Activated CD4-positive, alpha-beta T cell treated with anti-CD3 and anti-CD28 coated beads for 36 hours (primary cell): ENCODE measurements at regions of chr12 and their contacts with region 1.

Region 1: GRCh38 chr12:53746592-53747092 is 5.1 kb downstream of the CISTR start:
- DNase-seq: peak; percentile 94
- ATAC-seq: peak; percentile 86
- H3K4me3 Mint-ChIP-seq: no peak overlapping the region
- H3K27ac Mint-ChIP-seq: no peak overlapping the region
- H3K4me1 Mint-ChIP-seq: peaks cover 2% of the 10 kb centered on the region
- H3K27me3 Mint-ChIP-seq: peaks cover 38% of the 10 kb centered on the region

Region 2: DNA sequence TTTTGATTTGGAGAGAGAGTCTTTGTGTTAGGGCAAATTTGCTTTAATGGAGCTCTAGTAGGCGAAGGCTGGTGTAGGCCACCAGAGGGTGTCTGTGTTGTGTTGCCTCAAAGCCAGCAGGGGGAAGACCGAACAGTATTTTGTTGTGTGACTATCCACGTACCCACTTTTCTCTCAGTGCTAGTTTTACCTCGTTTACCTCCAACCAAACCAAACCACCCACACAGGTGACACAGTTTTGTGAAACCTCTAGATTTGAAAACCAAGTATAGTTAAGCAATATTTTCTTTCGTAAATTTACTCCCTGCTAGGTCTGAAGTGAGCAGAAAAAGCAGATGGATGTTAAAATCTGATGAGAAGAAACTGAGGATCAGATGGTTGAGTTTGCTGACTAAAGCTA is 203.1 kb before region 1 on chr12:
- CTCF ChIA-PET with region 1: interaction called, 32 read pairs
- POLR2A ChIA-PET with region 1: no interaction called
- intact Hi-C with region 1: loop called (anchors 1 to 2 kb)
- DNase-seq: peak; percentile 79
- ATAC-seq: peak; percentile 99
- H3K4me3 Mint-ChIP-seq: no peak overlapping the region
- H3K27ac Mint-ChIP-seq: peak overlapping the region; percentile 78
- H3K4me1 Mint-ChIP-seq: peaks cover 20% of the 10 kb centered on the region
- H3K27me3 Mint-ChIP-seq: no peaks in the 10 kb centered on the region

Region 3: DNA sequence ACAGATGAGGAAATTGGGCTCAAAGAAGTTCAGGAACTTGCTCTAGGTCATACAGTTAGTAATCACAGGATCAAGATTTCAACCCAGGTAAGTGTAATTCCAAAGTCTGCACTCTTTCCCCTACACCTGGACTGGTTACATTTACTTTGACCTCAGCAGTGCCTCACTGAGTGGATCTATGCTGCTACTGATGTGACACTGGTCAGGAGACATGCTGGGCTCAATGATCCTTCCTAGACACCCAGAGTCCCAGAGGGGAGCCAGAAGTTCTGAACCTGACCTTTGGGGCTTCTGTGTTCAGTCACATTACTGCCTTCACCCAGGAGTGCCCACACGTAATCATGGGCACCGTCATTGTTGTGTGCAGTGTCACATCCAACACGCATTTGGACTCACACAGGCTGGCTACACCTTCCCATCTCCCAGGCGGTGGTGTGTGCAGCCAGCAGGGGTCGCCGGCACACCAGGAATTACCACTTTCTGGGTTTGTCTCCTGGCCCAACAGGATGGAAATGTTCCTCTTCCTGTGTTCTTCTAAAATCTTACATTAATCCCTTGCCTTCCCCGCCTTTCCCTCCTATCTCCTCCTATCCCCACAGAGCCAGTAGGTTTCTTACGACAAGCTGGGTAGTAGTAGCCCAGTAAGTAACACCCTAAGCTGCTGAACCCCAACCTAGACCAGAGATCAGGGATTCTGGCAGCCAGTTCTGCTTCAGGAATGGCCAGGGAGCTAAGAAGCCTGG is 45.0 kb before region 1 on chr12:
- CTCF ChIA-PET with region 1: interaction called, 144 read pairs
- POLR2A ChIA-PET with region 1: interaction called, 3 read pairs
- intact Hi-C with region 1: loop called (anchors 1 kb)
- DNase-seq: peak; percentile 88
- ATAC-seq: peak; percentile 96
- H3K4me3 Mint-ChIP-seq: no peak overlapping the region
- H3K27ac Mint-ChIP-seq: no peak overlapping the region
- H3K4me1 Mint-ChIP-seq: peaks cover 4% of the 10 kb centered on the region
- H3K27me3 Mint-ChIP-seq: peaks cover 60% of the 10 kb centered on the region

Region 4: DNA sequence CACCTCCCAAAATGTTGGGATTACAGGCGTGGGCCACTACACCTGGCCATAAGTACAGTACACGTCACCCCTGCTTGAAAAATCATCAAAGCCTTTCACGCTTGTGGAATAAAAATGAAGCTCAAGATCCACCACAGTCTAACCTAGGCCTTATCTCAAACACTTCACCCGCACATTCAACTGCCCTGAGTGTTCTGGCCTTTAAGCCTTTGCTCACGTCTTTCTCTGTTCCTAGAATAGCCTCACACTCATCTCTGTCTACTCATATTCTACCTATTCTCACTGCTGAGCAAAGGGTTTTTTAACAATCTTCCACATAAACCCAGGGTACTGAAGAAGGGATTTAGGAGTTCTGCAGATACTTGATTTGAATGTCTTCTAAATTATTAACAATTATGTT is 29.3 kb before region 1 on chr12:
- CTCF ChIA-PET with region 1: interaction called, 37 read pairs
- POLR2A ChIA-PET with region 1: no interaction called
- intact Hi-C with region 1: no loop called
- DNase-seq: no peak
- ATAC-seq: no peak
- H3K4me3 Mint-ChIP-seq: no peak overlapping the region
- H3K27ac Mint-ChIP-seq: no peak overlapping the region
- H3K4me1 Mint-ChIP-seq: no peaks in the 10 kb centered on the region
- H3K27me3 Mint-ChIP-seq: no peaks in the 10 kb centered on the region

Region 5: DNA sequence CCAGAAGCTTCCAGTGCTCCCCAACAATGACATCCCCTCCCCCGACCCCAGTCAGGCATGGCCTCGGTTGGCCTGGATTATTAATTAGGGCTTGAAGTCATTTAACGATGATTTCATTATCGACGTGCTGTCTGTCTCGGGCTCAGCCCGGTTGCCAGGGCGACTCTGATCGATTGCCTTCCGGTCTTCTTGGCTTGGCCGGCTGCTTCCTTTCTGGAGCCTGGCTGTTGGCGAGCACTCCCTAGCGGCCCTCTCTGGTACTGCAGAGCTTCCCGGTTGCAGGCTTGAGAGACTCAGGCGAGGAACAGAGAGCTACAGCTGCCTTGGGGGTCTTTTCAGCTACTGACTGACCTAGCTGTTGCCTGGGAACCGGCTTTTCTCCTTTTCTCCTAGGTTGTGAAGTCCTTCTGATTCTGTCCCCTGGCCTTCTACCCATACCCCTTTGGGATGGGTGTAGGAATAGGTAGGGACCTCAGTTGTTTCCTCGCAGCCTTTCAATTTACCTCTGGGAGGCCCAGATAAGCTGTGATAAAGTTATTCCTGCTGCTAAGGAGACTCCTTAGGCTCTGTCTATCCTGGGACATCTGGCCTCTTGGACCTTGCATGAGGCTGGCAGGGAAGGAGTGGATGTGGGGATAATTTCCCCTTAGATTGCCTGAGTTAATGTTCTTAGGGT is 10.6 kb after region 1 on chr12:
- CTCF ChIA-PET with region 1: interaction called, 92 read pairs
- POLR2A ChIA-PET with region 1: no interaction called
- intact Hi-C with region 1: loop called in 1 of 2 experiments (anchors 1 kb)
- DNase-seq: peak; percentile 94
- ATAC-seq: peak; percentile 91
- H3K4me3 Mint-ChIP-seq: peak overlapping the region; percentile 31
- H3K27ac Mint-ChIP-seq: no peak overlapping the region
- H3K4me1 Mint-ChIP-seq: peaks cover 9% of the 10 kb centered on the region
- H3K27me3 Mint-ChIP-seq: peaks cover 36% of the 10 kb centered on the region

Region 6: DNA sequence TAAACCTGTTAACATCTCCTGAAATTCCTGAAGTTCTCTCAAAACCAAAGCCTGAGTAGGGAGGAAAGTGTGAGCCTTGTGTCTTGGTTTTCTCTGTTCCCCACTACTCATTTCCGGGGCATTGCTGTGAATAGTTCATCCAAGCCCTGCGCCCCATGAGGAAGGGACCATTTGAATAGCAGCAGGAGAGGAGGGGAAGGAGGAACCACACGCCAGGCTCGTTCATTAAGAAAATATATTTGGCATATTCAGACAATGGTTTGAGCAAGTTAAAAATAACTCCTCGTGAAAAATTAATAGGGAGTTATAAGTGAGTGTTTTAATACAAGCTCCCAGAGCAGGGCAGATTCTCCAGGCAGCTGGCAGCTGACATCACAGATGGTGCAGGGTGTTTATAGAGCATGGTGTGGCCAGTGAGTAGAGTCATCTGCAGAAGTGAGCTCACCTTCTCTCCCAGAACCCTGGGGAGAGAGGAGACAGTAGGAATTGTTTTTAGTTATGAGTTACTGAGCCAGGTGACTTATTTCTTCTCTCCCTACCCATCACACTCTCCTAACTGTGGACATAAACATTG is 34.7 kb after region 1 on chr12:
- CTCF ChIA-PET with region 1: interaction called, 14 read pairs
- POLR2A ChIA-PET with region 1: no interaction called
- intact Hi-C with region 1: no loop called
- DNase-seq: no peak
- ATAC-seq: no peak
- H3K4me3 Mint-ChIP-seq: no peak overlapping the region
- H3K27ac Mint-ChIP-seq: no peak overlapping the region
- H3K4me1 Mint-ChIP-seq: no peaks in the 10 kb centered on the region
- H3K27me3 Mint-ChIP-seq: peaks cover 37% of the 10 kb centered on the region